ENCODE measurements at regions of chr5 and their contacts with region 1.

Region 1: DNA sequence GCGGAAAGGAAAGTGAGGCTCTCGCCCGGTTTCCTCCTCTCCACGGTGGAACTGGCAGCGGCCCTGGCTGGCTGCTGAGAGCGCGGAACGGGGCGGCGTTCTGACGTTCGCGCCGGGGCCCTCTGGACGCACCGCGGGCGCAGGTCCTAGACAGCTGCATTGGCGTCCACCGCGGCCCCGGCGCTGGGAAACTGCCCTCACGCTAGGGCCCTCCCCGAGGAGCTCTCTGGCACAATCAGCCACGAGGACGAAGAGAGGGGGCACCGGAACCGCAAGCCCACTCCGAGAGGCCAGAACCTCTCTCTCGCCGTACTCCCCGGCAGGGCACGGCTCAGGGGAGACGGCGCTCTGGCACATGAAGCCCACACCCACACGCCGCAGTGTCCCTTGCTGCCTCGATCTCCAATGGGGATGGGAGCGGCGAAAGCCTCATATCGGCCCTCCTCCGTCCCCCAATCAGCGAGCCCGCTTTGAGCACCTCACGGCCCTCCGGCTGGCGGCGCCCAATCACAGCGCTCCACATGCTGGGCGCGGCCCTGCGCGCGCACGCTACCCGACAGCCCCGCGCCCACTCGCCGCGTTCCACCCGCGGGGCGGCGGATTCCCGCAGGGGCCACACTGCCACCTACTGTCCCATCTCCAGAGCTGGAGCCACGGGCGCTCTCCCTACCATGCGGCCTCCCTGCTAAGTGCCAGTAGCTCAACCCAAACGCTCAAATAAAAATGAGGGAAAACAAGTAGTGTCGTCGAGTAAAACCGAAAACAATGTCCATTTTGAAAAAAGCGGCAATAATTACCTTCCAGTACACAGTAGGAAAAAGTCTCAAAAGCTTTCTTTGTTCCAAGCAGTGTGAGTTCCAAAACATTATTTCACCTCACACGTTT is 11.8 kb downstream of the MRPS27 start:
- DNase-seq: peak; percentile 94
- H3K4me3 Mint-ChIP-seq: peak overlapping the region; percentile 85
- H3K27ac Mint-ChIP-seq: peak overlapping the region; percentile 92
- H3K4me1 Mint-ChIP-seq: peaks cover 32% of the 10 kb centered on the region
- H3K27me3 Mint-ChIP-seq: no peaks in the 10 kb centered on the region

Region 2: GRCh38 chr5:71455427-71456361 is 852.5 kb before region 1 on chr5 and contains the start of gene BDP1:
- CTCF ChIA-PET with region 1: no interaction called
- intact Hi-C with region 1: loop called (anchors 5 kb)
- DNase-seq: peak; percentile 99
- H3K4me3 Mint-ChIP-seq: peak within 1 kb of the TSS; percentile 92
- H3K27ac Mint-ChIP-seq: peak within 1 kb of the TSS; percentile 95
- H3K4me1 Mint-ChIP-seq: peaks cover 20% of the 10 kb centered on the region
- H3K27me3 Mint-ChIP-seq: peaks cover 3% of the 10 kb centered on the region
- total RNA-seq, gene BDP1: 20.6 to 20.8 TPM

Region 3: GRCh38 chr5:71996789-71997188 is 311.4 kb before region 1 on chr5:
- CTCF ChIA-PET with region 1: no interaction called
- intact Hi-C with region 1: no loop called
- DNase-seq: no peak
- H3K4me3 Mint-ChIP-seq: no peak overlapping the region
- H3K27ac Mint-ChIP-seq: no peak overlapping the region
- H3K4me1 Mint-ChIP-seq: no peaks in the 10 kb centered on the region
- H3K27me3 Mint-ChIP-seq: peaks cover 1% of the 10 kb centered on the region

Region 4: GRCh38 chr5:72319976-72320752 is 12.0 kb after region 1 on chr5 and contains the starts of genes MRPS27 and PTCD2:
- CTCF ChIA-PET with region 1: interaction called, 28 read pairs
- intact Hi-C with region 1: loop called (anchors 1 kb)
- DNase-seq: peak; percentile 97
- H3K4me3 Mint-ChIP-seq: peak within 1 kb of the TSS; percentile 80
- H3K27ac Mint-ChIP-seq: peak within 1 kb of the TSS; percentile 91
- H3K4me1 Mint-ChIP-seq: peaks cover 45% of the 10 kb centered on the region
- H3K27me3 Mint-ChIP-seq: no peaks in the 10 kb centered on the region
- total RNA-seq, gene MRPS27: 86.0 to 95.8 TPM
- total RNA-seq, gene PTCD2: 10.1 to 11.6 TPM

Region 5: DNA sequence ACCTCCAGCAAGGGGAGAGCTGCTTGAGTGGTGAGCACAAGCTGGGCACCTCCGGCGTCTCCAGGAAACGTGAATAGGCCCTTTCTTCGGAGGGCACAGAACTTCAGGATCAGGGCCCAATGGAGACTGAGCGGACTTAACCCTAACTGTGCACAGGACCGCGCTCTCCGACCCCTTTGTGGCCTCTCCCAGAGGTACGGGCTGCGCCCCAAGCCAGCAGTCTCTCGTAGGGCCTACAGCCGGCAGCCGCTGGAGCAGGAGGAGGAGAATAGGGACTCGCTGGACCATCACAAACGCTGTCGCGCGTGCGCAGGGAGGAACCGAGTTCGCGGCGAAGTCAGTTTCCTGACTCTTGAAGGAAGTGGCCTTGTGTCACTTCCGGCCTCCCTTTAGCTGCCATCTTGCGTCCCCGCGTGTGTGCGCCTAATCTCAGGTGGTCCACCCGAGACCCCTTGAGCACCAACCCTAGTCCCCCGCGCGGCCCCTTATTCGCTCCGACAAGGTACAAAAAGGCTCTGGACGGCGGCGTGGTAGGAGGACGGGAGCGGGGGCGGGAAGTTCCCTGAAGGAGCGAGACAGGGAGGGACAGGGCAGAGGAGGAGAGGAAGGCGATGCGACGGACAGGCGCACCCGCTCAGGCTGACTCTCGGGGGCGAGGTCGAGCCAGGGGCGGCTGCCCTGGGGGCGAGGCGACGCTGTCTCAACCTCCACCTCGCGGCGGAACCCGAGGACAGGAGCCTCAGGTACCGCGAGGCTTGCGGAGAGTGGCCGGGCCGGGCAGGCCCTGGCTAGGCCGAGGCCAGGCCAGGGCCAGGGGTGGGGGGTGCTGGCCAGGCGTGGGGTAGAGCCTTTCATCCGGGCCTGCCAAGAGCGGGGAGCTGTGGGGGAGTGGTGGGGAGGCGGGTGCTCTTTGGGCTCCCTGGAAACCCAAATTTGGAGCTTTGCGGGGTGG is 1190.1 kb after region 1 on chr5 and contains the start of gene BTF3:
- CTCF ChIA-PET with region 1: no interaction called
- intact Hi-C with region 1: loop called (anchors 2 kb)
- DNase-seq: peak; percentile 95
- H3K4me3 Mint-ChIP-seq: peak within 1 kb of the TSS; percentile 97
- H3K27ac Mint-ChIP-seq: peak within 1 kb of the TSS; percentile 96
- H3K4me1 Mint-ChIP-seq: peaks cover 42% of the 10 kb centered on the region
- H3K27me3 Mint-ChIP-seq: peaks cover 3% of the 10 kb centered on the region
- total RNA-seq, gene BTF3: 1,100 to 1,123 TPM